MCF 10A (cell line): ENCODE measurements at regions of chr19 and their contacts with region 1.

Region 1: GRCh38 chr19:6076675-6077463 is 33.4 kb downstream of the RFX2 start:
- DNase-seq: peak; percentile 82
- H3K4me3 Mint-ChIP-seq: peak overlapping the region; percentile 49
- H3K27ac Mint-ChIP-seq: peak overlapping the region; percentile 94
- H3K4me1 Mint-ChIP-seq: peaks cover 25% of the 10 kb centered on the region
- H3K27me3 Mint-ChIP-seq: no peaks in the 10 kb centered on the region
- CTCF ChIP-seq: no peak

Region 2: GRCh38 chr19:6056801-6057650 is 19.8 kb before region 1 on chr19:
- CTCF ChIA-PET with region 1: interaction called, 5 read pairs
- POLR2A ChIA-PET with region 1: interaction called, 53 read pairs
- intact Hi-C with region 1: loop called (anchors 2 kb)
- DNase-seq: peak; percentile 98
- H3K4me3 Mint-ChIP-seq: peak overlapping the region; percentile 57
- H3K27ac Mint-ChIP-seq: peak overlapping the region; percentile 100
- H3K4me1 Mint-ChIP-seq: peaks cover 40% of the 10 kb centered on the region
- H3K27me3 Mint-ChIP-seq: no peaks in the 10 kb centered on the region
- CTCF ChIP-seq: no peak

Region 3: GRCh38 chr19:6087074-6087571 is 10.3 kb after region 1 on chr19:
- CTCF ChIA-PET with region 1: interaction called, 6 read pairs
- POLR2A ChIA-PET with region 1: interaction called, 49 read pairs
- intact Hi-C with region 1: no loop called
- DNase-seq: no peak
- H3K4me3 Mint-ChIP-seq: no peak overlapping the region
- H3K27ac Mint-ChIP-seq: peak overlapping the region; percentile 91
- H3K4me1 Mint-ChIP-seq: peaks cover 29% of the 10 kb centered on the region
- H3K27me3 Mint-ChIP-seq: no peaks in the 10 kb centered on the region
- CTCF ChIP-seq: no peak

Region 4: GRCh38 chr19:6103217-6103644 is 26.4 kb after region 1 on chr19:
- CTCF ChIA-PET with region 1: interaction called, 4 read pairs
- POLR2A ChIA-PET with region 1: interaction called, 24 read pairs
- intact Hi-C with region 1: no loop called
- DNase-seq: peak; percentile 98
- H3K4me3 Mint-ChIP-seq: peak overlapping the region; percentile 24
- H3K27ac Mint-ChIP-seq: peak overlapping the region; percentile 97
- H3K4me1 Mint-ChIP-seq: peaks cover 60% of the 10 kb centered on the region
- H3K27me3 Mint-ChIP-seq: no peaks in the 10 kb centered on the region
- CTCF ChIP-seq: no peak

Region 5: DNA sequence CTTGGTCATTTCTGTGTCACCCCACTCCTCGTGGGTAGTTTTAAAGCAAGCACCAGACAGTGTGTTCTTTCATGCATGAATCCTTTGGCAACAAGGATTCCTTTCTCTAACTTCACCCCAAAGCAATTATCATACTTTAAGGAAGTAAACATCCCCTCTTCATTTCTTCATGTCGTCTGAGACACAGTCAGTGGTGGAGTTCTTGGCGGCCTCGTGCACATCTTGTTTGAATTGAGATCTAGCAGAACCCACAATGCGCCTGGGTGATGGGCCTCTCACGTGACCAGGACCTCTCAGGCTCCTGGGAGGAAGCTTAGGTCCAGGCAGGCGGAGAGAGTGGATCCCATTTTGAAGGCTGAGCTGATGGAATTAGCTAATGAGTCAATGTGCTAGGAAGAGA is 61.2 kb after region 1 on chr19:
- CTCF ChIA-PET with region 1: no interaction called
- POLR2A ChIA-PET with region 1: no interaction called
- intact Hi-C with region 1: no loop called
- DNase-seq: no peak
- H3K4me3 Mint-ChIP-seq: no peak overlapping the region
- H3K27ac Mint-ChIP-seq: no peak overlapping the region
- H3K4me1 Mint-ChIP-seq: no peaks in the 10 kb centered on the region
- H3K27me3 Mint-ChIP-seq: no peaks in the 10 kb centered on the region
- CTCF ChIP-seq: no peak